Right ventricle myocardium superior (tissue), 1 donor: ENCODE measurements at regions of chr20 and their contacts with region 1.

Region 1: DNA sequence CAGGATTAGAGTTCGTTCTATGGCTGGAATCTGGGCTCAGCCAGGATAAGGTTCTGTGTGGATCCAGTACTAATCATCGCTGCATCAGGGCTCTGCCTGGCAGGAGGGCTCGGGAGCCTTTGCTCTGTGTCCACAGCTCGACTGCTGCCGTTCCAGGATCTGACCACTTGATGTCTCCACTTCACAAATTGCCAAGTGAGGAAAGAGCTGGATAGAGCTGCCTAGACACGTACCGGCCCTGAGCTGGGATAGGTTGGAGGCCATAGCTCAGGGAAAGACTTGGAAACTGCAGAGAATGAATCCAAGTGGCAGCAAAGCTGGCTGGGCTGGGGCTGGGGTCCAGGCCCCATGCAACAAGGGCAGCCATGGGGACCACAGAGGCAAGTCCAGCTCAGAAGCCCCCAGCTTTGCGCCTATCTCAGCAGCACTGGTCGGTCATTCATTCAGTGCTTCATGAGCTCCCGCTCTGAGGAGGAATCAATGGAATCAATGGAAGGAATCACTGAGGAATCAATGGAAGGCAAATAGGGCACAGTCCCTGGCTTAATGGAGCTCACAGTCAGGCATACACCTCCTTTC is 38.0 kb upstream of the TOP1 start:
- DNase-seq: peak; percentile 82
- ATAC-seq: peak; percentile 98

Region 2: DNA sequence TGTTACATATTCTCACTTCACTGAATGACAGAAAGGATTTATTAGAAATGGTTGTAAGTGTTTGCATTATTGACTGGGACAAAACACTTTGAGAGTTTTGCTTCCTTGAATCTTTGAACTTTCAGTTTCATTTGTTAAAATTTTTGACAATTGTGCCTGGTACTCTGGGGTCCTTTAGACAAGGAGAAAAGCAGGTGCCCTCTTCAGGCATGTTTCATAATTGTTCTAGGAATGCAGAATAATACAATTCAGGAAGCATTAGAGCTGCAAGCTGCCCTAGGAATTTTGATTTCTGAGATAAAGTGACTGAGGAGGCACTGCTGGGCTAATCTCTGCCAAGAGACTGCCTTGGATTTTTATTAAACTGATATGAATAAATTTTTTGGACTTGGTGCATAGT is 87.7 kb after region 1 on chr20:
- intact Hi-C with region 1: loop called (anchors 5 kb)
- DNase-seq: no peak
- ATAC-seq: peak; percentile 79

Region 3: GRCh38 chr20:41095110-41095969 is 104.7 kb after region 1 on chr20:
- intact Hi-C with region 1: loop called (anchors 2 kb)
- DNase-seq: peak; percentile 66
- ATAC-seq: peak; percentile 85